Posterior vena cava (tissue), 2 donors: ENCODE measurements at regions of chr12 and their contacts with region 1.

Region 1: GRCh38 chr12:57459055-57459749 is 383 bp upstream of the GLI1 start:
- DNase-seq: peak; percentile 98

Region 2: GRCh38 chr12:57481671-57482070 is 22.5 kb after region 1 on chr12:
- intact Hi-C with region 1: loop called in 1 of 2 experiments (anchors 1 kb)
- DNase-seq: no peak